ENCODE measurements at regions of chr15 and their contacts with region 1.

Region 1: GRCh38 chr15:78108299-78109084 is 16.1 kb downstream of the SH2D7 start:
- DNase-seq: peak; percentile 85 to 93
- H3K4me3 ChIP-seq: no peak overlapping the region
- H3K4me1 ChIP-seq: peaks cover under 1% of the 10 kb centered on the region
- H3K27me3 ChIP-seq: no peaks in the 10 kb centered on the region

Region 2: DNA sequence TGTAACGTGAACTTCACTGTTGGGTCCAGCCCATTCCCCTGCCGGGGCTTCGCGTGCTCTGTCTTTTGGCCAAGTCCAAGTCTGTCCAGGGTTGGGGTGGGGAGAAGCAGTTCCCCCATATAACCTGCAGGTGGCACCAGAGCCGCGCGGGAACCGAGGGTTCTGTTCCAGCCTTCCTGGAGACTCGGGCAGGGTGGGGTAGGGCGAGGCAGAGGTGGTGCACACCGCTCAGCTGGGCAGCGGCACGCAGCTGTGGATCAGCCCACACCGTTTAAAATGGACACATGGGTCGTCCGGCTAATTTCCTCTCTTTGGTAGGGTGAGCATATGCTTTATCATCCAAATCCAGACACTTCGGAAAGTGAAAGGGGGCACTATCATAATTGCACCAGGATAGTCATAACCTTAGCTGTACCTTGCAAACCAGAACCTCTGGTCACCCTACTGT is 149.0 kb before region 1 on chr15:
- in situ Hi-C with region 1: loop called (anchors 5 kb)
- DNase-seq: peak; percentile 89 to 97
- H3K4me3 ChIP-seq: no peak overlapping the region
- H3K4me1 ChIP-seq: peaks cover 7% of the 10 kb centered on the region
- H3K27me3 ChIP-seq: peaks cover 19% of the 10 kb centered on the region

Region 3: DNA sequence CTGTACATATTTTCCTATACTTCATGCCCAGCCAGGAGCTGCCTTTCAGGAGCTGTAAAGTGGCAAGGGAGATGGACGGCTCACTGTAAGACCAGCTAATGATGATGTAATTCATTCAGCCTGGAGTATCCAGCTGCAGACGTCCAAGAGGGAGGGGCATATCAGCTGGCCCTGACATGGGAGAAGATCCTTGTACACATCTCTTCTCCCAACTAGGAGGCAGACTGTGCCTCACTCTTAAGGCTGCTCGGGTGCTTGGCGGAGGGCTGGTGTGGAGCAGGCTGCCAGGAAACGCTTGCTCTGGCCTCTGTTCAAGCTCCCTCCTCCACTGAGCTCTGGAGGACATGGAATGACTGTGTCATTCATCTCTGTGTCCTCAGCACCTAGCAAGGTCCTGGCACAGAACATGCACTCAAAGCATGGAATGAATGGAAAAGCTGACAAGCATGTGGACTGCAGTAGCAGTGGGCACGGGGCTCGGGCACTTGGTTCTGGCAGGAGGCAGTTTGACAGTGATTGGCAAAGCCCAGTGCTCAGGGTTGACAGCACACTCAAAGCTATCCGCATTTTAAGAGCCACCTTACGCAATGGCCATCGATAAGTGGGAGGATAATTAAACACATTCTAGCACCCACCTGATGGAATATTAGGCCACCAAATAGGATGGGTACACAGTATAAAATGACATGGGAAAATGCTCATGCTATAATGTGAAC is 103.4 kb before region 1 on chr15:
- in situ Hi-C with region 1: loop called (anchors 5 kb)
- DNase-seq: no peak
- H3K4me3 ChIP-seq: no peak overlapping the region
- H3K4me1 ChIP-seq: no peaks in the 10 kb centered on the region
- H3K27me3 ChIP-seq: no peaks in the 10 kb centered on the region

Region 4: GRCh38 chr15:78195735-78196201 is 87.3 kb after region 1 on chr15:
- in situ Hi-C with region 1: loop called (anchors 5 kb)
- DNase-seq: peak; percentile 66 to 74
- H3K4me3 ChIP-seq: no peak overlapping the region
- H3K4me1 ChIP-seq: no peaks in the 10 kb centered on the region
- H3K27me3 ChIP-seq: no peaks in the 10 kb centered on the region; the same call in 1 of the 2 replicates

Region 5: GRCh38 chr15:78241007-78241406 is 132.5 kb after region 1 on chr15:
- in situ Hi-C with region 1: loop called (anchors 5 kb)
- DNase-seq: peak; percentile 94 to 99
- H3K4me3 ChIP-seq: no peak overlapping the region
- H3K4me1 ChIP-seq: no peaks in the 10 kb centered on the region
- H3K27me3 ChIP-seq: no peaks in the 10 kb centered on the region; the same call in 1 of the 2 replicates

Region 6: DNA sequence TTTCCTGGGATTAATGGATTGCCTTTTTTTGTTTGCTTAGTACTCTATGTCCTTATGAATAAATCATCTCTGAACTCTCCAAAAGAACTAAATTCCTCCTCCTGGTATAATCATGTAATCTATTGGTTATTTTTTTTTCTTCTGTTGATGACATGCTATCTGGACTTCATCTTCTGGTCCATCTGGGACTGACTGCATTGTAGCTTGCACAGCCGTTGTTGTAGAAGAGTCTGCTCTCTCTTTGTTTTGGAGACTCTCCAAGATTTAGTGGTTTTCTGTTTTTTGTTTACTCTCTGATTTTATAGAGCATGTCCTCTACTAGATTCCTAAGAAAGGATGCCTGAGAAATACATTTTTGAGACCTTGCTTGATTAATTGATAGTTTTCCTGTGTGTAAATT is 348.6 kb after region 1 on chr15:
- in situ Hi-C with region 1: no loop called
- DNase-seq: no peak
- H3K4me3 ChIP-seq: no peak overlapping the region
- H3K4me1 ChIP-seq: peaks cover 5% of the 10 kb centered on the region
- H3K27me3 ChIP-seq: no peaks in the 10 kb centered on the region